ENCODE measurements at regions of chr17 and their contacts with region 1.

Region 1: DNA sequence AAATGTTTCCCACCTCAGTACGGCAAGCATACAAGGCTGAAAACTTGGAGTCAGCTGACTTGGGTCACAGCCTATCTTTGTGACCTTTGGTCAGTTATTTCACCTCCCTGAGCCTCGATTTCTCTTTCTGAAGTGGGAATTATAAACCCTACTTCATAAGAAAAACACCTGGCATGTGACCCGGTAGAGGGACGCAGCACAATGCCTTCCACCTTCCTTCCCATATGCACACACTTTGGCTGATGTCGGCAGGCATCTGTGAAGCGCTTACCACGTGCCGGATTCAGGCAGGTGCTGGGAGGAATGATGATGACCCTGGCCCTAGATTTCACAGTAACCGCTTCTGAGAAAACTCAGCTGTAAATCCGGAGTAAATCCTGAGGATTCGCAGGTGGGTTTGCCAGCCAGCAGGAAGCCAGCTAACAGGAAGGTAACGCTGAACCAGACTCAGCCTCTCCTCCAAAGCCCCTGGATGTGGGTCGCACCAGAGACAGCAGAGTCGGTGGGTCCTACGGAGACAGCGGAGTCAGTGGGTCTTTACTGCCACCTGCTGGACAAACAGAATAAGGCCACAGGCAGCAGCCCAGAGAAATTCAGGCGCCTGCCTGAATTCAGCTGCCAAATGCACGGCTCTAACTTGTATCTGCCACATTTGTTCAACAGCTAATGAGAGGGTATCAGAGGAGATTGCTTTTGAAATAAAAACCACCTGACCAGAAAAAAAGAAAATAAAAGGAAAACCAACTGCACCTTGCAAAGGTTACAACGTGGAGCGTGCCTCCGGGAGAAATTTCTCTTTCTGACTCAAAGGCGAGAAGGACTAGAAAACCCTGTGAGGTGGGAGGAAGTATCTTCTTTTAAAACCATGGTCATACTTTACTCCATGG is 16.6 kb downstream of the COPRS start:
- DNase-seq: peak; percentile 78
- H3K4me3 ChIP-seq: peak overlapping the region; percentile 16
- H3K27ac ChIP-seq: peak overlapping the region; percentile 15
- H3K4me1 ChIP-seq: no peaks in the 10 kb centered on the region
- H3K27me3 ChIP-seq: no peaks in the 10 kb centered on the region
- CTCF ChIP-seq: peak; percentile 98

Region 2: DNA sequence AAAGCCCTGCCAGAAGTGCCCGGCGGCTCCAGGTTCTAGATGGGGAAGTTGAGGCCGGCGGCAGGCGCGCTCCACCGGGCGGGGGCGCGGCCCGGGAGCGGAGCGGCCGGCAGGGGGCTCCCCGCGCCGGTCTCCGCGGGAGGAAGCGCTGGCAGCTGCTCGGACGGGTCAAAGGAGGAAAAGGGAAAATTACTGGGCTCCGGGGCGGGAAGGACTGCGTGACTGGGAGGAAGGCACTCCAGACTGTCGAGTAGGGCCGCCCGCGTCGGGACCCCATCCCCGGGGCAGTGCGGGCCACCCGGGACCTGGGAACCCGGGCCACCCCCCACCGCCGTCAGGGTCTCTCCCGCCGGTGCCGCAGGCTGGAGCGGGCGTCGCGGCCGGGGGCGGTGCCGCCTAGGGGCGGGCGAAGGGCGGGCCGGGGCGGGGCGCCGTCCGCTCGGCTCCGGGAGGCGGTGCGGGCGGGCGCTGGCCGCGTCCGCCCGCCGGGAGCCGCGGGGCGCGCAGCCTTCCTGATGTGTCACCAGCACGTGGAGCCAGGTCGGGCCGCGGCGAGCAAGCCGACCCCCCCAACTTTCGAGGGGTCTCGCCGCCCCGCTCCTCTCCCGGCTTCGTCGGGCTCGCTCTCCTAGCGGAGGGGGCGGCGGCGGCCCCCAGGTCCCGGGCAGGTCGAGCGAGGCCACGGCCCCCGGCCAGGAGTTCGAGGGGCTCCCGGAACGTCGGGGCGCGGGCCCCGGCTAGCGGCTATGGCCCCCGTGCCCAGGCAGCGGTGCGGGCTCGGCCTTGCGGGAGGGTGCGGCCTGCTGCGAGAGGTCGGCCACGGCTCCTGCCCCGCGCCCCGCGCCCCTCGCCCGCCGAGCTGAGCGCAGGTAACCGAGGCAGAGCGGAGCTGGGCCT is 283.4 kb before region 1 on chr17:
- intact Hi-C with region 1: loop called (anchors 2 kb)
- DNase-seq: peak; percentile 78
- H3K4me3 ChIP-seq: peak overlapping the region; percentile 74
- H3K27ac ChIP-seq: peak overlapping the region; percentile 85
- H3K4me1 ChIP-seq: peaks cover 11% of the 10 kb centered on the region
- H3K27me3 ChIP-seq: no peaks in the 10 kb centered on the region
- CTCF ChIP-seq: peak; percentile 85

Region 3: GRCh38 chr17:32609884-32610650 is 767.6 kb after region 1 on chr17:
- intact Hi-C with region 1: no loop called
- DNase-seq: no peak
- H3K4me3 ChIP-seq: no peak overlapping the region
- H3K27ac ChIP-seq: no peak overlapping the region
- H3K4me1 ChIP-seq: no peaks in the 10 kb centered on the region
- H3K27me3 ChIP-seq: no peaks in the 10 kb centered on the region
- CTCF ChIP-seq: no peak

Measured in colonic mucosa (tissue), 4 donors.